Activated CD4-positive, alpha-beta T cell treated with anti-CD3 and anti-CD28 coated beads for 36 hours (primary cell): ENCODE measurements at regions of chr2 and their contacts with region 1.

Region 1: DNA sequence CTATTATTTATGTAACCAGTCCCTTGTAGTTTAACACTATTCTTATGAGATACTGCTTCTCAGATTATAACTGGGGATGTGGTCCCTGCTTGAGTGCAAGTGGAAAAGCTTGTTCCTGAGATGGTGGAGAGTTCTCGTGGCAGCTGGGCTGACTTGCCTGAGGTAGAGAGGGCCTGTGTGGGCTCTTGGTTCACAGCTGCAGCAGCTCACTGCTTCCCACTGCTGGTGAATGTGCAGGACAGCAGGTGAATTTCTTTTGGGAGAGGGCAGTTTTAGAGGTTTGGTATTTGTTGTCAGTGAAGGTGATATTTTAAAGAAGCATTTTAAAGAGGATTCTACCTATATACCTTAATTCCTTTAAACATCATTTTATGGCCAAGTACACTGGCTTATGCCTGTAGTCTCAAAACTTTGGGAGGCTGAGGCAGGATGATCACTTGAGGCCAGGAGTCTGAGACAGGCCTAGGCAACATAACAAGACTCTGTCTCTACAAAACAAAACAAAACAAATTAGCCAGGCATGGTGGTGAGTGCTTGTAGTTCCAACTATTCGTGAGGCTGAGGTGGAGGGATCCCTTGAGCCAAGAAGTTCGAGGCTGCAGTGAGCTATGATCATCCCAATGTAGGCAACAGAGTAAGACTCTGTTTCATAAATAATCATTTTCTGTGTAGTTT is 94.8 kb downstream of the MTA3 start:
- DNase-seq: peak; percentile 80
- ATAC-seq: peak; percentile 98
- H3K4me3 Mint-ChIP-seq: no peak overlapping the region
- H3K27ac Mint-ChIP-seq: peak overlapping the region; percentile 38
- H3K4me1 Mint-ChIP-seq: peaks cover 15% of the 10 kb centered on the region
- H3K27me3 Mint-ChIP-seq: no peaks in the 10 kb centered on the region

Region 2: GRCh38 chr2:41869542-41870264 is 793.5 kb before region 1 on chr2:
- CTCF ChIA-PET with region 1: no interaction called
- POLR2A ChIA-PET with region 1: no interaction called
- intact Hi-C with region 1: loop called in 1 of 2 experiments (anchors 5 kb)
- DNase-seq: peak; percentile 86
- ATAC-seq: peak; percentile 85
- H3K4me3 Mint-ChIP-seq: no peak overlapping the region
- H3K27ac Mint-ChIP-seq: no peak overlapping the region
- H3K4me1 Mint-ChIP-seq: peaks cover 6% of the 10 kb centered on the region
- H3K27me3 Mint-ChIP-seq: peaks cover 9% of the 10 kb centered on the region

Region 3: GRCh38 chr2:42102024-42102590 is 561.1 kb before region 1 on chr2:
- CTCF ChIA-PET with region 1: no interaction called
- POLR2A ChIA-PET with region 1: no interaction called
- intact Hi-C with region 1: loop called (anchors 5 to 10 kb)
- DNase-seq: peak; percentile 89
- ATAC-seq: peak; percentile 40
- H3K4me3 Mint-ChIP-seq: peak overlapping the region; percentile 69
- H3K27ac Mint-ChIP-seq: peak overlapping the region; percentile 94
- H3K4me1 Mint-ChIP-seq: peaks cover 38% of the 10 kb centered on the region
- H3K27me3 Mint-ChIP-seq: no peaks in the 10 kb centered on the region

Region 4: DNA sequence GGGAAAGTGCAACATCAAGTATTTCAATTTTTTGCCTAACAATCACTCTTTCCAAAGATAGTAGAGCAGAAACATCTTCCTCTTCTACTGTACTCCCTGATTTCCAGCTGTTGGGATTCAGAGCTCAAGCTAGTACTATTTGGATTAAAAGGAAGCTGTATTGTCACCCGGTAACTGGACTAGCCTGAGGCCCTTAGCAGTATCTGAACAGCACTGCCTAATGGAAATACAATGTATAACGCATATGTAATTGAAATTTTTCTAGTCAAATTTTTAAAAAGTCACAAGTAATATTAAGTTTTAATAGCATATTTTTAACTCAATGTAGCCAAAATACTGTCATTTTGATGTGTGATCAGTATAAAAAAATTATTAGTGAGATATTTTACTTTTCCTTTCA is 388.4 kb before region 1 on chr2:
- CTCF ChIA-PET with region 1: no interaction called
- POLR2A ChIA-PET with region 1: no interaction called
- intact Hi-C with region 1: no loop called
- DNase-seq: no peak
- ATAC-seq: no peak
- H3K4me3 Mint-ChIP-seq: no peak overlapping the region
- H3K27ac Mint-ChIP-seq: no peak overlapping the region
- H3K4me1 Mint-ChIP-seq: peaks cover 4% of the 10 kb centered on the region
- H3K27me3 Mint-ChIP-seq: no peaks in the 10 kb centered on the region

Region 5: GRCh38 chr2:42494355-42495233 is 168.6 kb before region 1 on chr2:
- CTCF ChIA-PET with region 1: interaction called, 50 read pairs
- POLR2A ChIA-PET with region 1: no interaction called
- intact Hi-C with region 1: loop called (anchors 1 kb)
- DNase-seq: peak; percentile 89
- ATAC-seq: peak; percentile 59
- H3K4me3 Mint-ChIP-seq: peak overlapping the region; percentile 80
- H3K27ac Mint-ChIP-seq: peak overlapping the region; percentile 81
- H3K4me1 Mint-ChIP-seq: peaks cover 17% of the 10 kb centered on the region
- H3K27me3 Mint-ChIP-seq: peaks cover 8% of the 10 kb centered on the region

Region 6: GRCh38 chr2:42568401-42569115 is 94.7 kb before region 1 on chr2 and contains the start of gene MTA3:
- CTCF ChIA-PET with region 1: interaction called, 12 read pairs
- POLR2A ChIA-PET with region 1: no interaction called
- intact Hi-C with region 1: loop called (anchors 2 to 5 kb)
- DNase-seq: peak; percentile 81
- ATAC-seq: peak; percentile 81
- H3K4me3 Mint-ChIP-seq: peak within 1 kb of the TSS; percentile 86
- H3K27ac Mint-ChIP-seq: peak within 1 kb of the TSS; percentile 91
- H3K4me1 Mint-ChIP-seq: peaks cover 32% of the 10 kb centered on the region
- H3K27me3 Mint-ChIP-seq: no peaks in the 10 kb centered on the region
- total RNA-seq, gene MTA3: 45.0 to 58.6 TPM

Region 7: DNA sequence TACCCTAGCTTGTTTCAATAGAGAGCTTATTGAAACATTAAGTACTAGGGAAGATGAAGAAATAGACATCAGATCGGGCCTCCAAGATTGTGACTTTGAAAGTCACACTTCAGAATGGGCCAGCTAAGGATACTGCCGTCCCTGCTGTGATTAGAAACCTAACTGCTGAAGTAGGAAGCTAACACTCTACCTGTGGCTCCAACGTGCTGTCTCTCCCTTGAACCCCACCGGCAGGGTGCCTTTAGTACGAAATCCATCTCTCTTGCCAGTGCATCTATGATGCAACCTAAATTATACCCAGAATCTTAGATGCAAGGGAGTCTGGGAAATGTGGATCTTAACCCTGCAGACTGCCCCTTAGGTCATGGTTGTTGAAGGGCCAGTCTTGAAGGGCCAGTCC is 22.1 kb after region 1 on chr2:
- CTCF ChIA-PET with region 1: interaction called, 10 read pairs
- POLR2A ChIA-PET with region 1: no interaction called
- intact Hi-C with region 1: no loop called
- DNase-seq: no peak
- ATAC-seq: no peak
- H3K4me3 Mint-ChIP-seq: no peak overlapping the region
- H3K27ac Mint-ChIP-seq: no peak overlapping the region
- H3K4me1 Mint-ChIP-seq: no peaks in the 10 kb centered on the region
- H3K27me3 Mint-ChIP-seq: no peaks in the 10 kb centered on the region